ENCODE measurements at regions of chr11 and their contacts with region 1.

Region 1: DNA sequence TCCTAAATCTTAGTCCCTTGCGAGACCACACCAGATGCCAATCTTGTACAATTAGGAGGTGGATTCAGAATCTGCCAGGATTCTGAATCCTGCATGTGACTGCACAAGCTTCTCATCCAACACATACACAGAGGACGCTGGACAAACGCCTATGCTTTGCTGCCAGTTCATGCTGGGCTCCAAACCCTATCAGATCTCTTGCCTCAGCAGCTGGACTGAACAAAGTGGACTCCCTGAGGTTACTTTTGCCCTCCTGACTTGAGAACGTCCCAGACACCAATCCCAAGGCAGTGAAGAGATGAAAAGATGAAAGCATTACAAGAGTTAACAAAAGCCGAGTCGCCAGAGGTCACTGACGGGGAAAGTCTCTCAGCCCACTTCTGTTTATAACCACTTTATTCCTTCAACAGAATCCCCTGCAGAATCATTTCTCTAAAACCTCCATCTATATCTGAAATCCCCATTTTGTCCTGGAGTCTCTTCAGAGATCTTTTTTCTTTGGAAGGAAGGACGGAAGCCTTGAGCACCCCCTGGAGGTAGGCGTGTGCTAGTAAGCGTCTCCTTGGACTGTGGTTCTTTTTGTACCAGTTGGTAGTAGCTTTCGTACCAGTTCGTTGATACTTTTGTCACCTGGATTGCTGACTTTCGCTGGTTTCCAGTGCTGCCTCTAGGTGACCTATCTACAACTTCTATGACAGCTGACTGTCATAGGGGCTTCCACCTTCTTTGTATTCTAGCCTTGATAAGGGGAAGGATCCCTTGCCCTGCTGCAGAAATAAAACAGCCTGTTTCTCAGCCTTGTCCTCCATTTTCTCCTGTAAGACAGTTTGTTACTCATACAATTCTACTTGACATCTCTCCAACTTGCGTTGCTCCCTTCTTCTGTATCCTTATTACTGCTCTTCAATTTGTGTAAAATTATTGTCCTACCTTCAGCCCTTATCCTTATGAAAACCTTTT is 26.1 kb upstream of the EED start:
- DNase-seq: peak; percentile 70
- ATAC-seq: peak; percentile 94
- H3K4me3 ChIP-seq: no peak overlapping the region
- H3K27ac ChIP-seq: no peak overlapping the region
- H3K4me1 ChIP-seq: no peaks in the 10 kb centered on the region
- H3K27me3 ChIP-seq: no peaks in the 10 kb centered on the region
- CTCF ChIP-seq: peak; percentile 92

Region 2: GRCh38 chr11:85941380-85941973 is 276.9 kb before region 1 on chr11:
- intact Hi-C with region 1: loop called (anchors 10 kb)
- DNase-seq: no peak
- ATAC-seq: peak; percentile 90
- H3K4me3 ChIP-seq: no peak overlapping the region
- H3K27ac ChIP-seq: no peak overlapping the region
- H3K4me1 ChIP-seq: no peaks in the 10 kb centered on the region
- H3K27me3 ChIP-seq: no peaks in the 10 kb centered on the region
- CTCF ChIP-seq: peak; percentile 79

Region 3: DNA sequence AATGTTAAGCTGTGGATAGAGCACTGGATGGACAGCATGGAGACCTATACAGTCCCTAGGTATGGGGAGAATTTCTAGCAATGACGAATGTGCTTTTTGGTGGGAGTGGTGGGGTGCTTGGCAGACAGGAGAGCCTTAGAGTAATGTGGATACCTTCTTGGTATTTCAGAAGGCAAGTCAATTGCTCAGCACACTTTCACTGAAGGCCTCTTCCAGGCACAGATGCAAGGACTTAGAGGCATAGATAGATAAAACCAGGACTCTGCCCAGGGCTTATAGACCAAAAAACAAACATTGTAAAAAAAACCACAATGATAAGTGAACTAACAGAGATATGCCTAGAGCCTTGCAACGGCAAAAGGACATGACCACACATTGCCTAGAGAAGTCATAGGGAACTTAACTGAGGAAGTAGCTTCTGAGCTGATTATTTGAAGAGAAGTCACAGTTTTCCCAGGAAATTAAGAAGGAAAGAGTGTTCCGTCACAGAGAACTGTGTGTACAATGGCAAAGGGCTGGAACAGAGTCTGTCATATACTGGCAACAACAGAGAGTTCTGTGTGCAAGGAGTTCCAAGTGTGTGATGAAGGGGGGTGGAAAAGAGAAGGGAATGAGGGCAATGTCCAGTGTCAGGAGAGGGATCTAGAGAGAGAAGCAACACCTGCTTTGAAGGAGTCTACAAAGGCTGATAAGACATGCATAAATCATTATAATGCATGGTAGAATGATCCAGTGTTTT is 83.7 kb before region 1 on chr11:
- intact Hi-C with region 1: no loop called
- DNase-seq: no peak
- ATAC-seq: peak; percentile 62
- H3K4me3 ChIP-seq: no peak overlapping the region
- H3K27ac ChIP-seq: no peak overlapping the region
- H3K4me1 ChIP-seq: no peaks in the 10 kb centered on the region
- H3K27me3 ChIP-seq: no peaks in the 10 kb centered on the region
- CTCF ChIP-seq: no peak